Activated CD8-positive, alpha-beta T cell treated with anti-CD3 and anti-CD28 coated beads, Interleukin-2, amount 10 ng/mL, durations not matched to agents 7 days and 5 days (primary cell): ENCODE measurements at regions of chr4 and their contacts with region 1.

Region 1: GRCh38 chr4:108570993-108571569 is 49.3 kb upstream of the RPL34 start:
- DNase-seq: no peak
- ATAC-seq: no peak
- H3K4me3 Mint-ChIP-seq: no peak overlapping the region
- H3K27ac Mint-ChIP-seq: no peak overlapping the region
- H3K4me1 Mint-ChIP-seq: peaks cover 20% of the 10 kb centered on the region
- H3K27me3 Mint-ChIP-seq: no peaks in the 10 kb centered on the region

Region 2: GRCh38 chr4:108030332-108030731 is 540.7 kb before region 1 on chr4:
- CTCF ChIA-PET with region 1: interaction called, 60 read pairs
- POLR2A ChIA-PET with region 1: no interaction called
- DNase-seq: peak; percentile 85
- ATAC-seq: peak; percentile 87
- H3K4me3 Mint-ChIP-seq: peak overlapping the region; percentile 48
- H3K27ac Mint-ChIP-seq: peak overlapping the region; percentile 79
- H3K4me1 Mint-ChIP-seq: peaks cover 70% of the 10 kb centered on the region
- H3K27me3 Mint-ChIP-seq: no peaks in the 10 kb centered on the region

Region 3: GRCh38 chr4:108172753-108173598 is 398.1 kb before region 1 on chr4:
- CTCF ChIA-PET with region 1: interaction called, 16 read pairs
- POLR2A ChIA-PET with region 1: interaction called, 5 read pairs
- DNase-seq: peak; percentile 78
- ATAC-seq: peak; percentile 58
- H3K4me3 Mint-ChIP-seq: peak overlapping the region; percentile 97
- H3K27ac Mint-ChIP-seq: peak overlapping the region; percentile 94
- H3K4me1 Mint-ChIP-seq: peaks cover 53% of the 10 kb centered on the region
- H3K27me3 Mint-ChIP-seq: peaks cover 19% of the 10 kb centered on the region

Region 4: DNA sequence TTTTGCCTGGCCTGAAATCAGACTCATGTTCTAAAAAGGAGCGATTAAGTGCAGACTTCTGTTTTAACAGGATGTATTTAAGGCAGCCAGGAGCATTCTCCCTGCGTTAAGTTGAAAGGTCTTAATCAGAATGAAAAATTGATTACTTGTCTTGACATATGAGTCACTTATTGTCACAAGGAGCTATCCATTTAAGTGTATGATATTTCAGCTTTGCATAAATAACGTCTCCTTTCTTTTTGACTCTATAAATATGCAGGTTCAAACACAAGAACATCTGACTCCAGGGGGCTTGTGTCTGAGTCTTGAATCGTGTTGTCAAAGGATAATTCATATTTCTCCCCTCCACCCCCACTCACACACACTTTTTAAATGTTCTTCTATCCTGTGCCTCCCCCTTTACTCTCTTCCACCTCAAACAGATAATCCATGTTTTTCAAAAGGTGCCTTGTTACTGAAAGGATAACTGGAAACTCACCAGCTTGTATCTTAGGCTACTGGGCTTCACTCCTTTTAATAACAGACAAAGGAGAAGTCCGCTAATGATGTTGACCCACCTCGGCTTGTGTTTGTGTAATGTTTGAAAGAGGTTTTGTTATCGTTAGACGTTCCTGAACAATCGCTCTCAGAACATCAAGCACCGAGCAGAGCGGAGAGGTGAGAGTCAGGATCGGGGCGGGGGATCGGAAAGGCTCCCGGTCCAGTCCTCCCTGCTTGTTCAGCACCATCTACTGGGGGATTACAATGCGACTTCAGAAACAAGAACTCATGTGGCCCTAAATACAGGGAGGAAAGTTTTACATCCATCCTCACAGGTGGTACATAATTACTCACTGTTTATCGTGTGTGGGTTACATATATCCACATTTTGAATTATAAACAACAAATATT is 58.2 kb before region 1 on chr4:
- CTCF ChIA-PET with region 1: interaction called, 16 read pairs
- POLR2A ChIA-PET with region 1: no interaction called
- DNase-seq: peak; percentile 69
- ATAC-seq: peak; percentile 94
- H3K4me3 Mint-ChIP-seq: peak overlapping the region; percentile 59
- H3K27ac Mint-ChIP-seq: no peak overlapping the region
- H3K4me1 Mint-ChIP-seq: peaks cover 17% of the 10 kb centered on the region
- H3K27me3 Mint-ChIP-seq: peaks cover 6% of the 10 kb centered on the region

Region 5: GRCh38 chr4:108533245-108533844 is 37.7 kb before region 1 on chr4:
- CTCF ChIA-PET with region 1: interaction called, 31 read pairs
- POLR2A ChIA-PET with region 1: no interaction called
- DNase-seq: no peak
- ATAC-seq: peak; percentile 53
- H3K4me3 Mint-ChIP-seq: peak overlapping the region; percentile 51
- H3K27ac Mint-ChIP-seq: peak overlapping the region; percentile 71
- H3K4me1 Mint-ChIP-seq: peaks cover 71% of the 10 kb centered on the region
- H3K27me3 Mint-ChIP-seq: no peaks in the 10 kb centered on the region

Region 6: DNA sequence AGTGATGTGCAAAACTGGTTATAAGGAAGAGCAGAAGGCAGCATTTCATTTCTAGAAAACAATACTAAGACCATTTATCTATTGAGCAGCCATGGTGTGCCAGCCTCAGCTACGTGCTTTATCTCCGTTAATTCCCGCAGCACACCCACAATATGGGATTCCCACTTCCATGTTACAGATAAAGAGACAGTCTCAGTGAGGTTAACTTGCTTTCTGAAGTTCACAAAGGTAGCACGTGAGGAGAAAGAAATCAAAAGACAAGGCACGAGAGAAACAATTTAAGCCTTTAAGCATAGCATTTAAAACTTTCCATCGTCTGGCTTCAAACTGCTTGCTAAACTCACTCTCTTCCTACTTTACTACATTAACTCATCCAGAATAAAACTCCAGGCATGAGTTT is 41.3 kb after region 1 on chr4:
- CTCF ChIA-PET with region 1: no interaction called
- POLR2A ChIA-PET with region 1: no interaction called
- DNase-seq: no peak
- ATAC-seq: no peak
- H3K4me3 Mint-ChIP-seq: no peak overlapping the region
- H3K27ac Mint-ChIP-seq: no peak overlapping the region
- H3K4me1 Mint-ChIP-seq: no peaks in the 10 kb centered on the region
- H3K27me3 Mint-ChIP-seq: no peaks in the 10 kb centered on the region